GM13976 (cell line): ENCODE measurements at regions of chr1 and their contacts with region 1.

Region 1: DNA sequence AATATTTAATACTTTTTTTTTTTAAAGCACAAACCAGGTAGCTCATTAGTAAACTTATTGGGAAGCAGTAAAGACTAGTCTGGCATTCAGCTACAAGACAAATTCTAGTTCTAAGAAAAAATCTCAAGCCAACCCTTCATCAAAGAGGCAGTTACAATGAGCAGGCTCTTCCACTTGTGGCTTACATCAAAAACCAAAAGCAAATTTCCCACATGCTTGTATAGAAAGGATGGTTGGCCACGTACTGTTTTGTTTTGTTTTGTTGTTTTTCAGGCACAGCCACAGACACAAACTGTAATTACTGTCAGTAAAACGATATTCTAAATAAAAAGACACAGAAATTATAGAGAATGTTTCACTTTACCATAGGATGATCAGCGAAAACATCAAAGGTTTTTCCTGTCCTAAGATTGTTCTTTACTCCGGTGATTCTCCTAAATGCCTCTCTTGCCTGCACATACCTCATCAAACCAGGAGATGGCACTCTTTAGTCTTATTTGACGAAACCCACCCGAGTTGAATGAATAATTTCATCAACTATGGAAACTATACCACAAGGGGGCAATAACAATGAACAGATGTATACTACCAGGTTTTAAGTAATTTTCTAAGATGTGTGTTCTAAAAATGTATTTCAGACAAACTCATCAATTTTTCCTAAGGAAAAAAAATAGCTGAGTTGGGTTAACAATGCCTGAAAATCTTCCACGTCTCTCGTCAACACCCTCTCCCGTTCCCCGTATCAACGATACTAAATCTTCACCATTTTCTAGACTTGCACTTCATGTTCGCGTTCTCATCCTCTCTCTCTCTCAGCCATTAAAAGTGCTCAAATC is 26.9 kb downstream of the RPL5 start:
- DNase-seq: peak; percentile 66
- CTCF ChIP-seq: peak; percentile 71

Region 2: GRCh38 chr1:92461364-92462097 is 397.3 kb before region 1 on chr1:
- in situ Hi-C with region 1: no loop called
- DNase-seq: peak; percentile 54
- CTCF ChIP-seq: no peak

Region 3: GRCh38 chr1:92922356-92923035 is 63.7 kb after region 1 on chr1:
- in situ Hi-C with region 1: no loop called
- DNase-seq: no peak
- CTCF ChIP-seq: no peak

Region 4: GRCh38 chr1:92951141-92951582 is 92.4 kb after region 1 on chr1:
- in situ Hi-C with region 1: loop called (anchors 10 kb)
- DNase-seq: no peak
- CTCF ChIP-seq: peak; percentile 20

Region 5: DNA sequence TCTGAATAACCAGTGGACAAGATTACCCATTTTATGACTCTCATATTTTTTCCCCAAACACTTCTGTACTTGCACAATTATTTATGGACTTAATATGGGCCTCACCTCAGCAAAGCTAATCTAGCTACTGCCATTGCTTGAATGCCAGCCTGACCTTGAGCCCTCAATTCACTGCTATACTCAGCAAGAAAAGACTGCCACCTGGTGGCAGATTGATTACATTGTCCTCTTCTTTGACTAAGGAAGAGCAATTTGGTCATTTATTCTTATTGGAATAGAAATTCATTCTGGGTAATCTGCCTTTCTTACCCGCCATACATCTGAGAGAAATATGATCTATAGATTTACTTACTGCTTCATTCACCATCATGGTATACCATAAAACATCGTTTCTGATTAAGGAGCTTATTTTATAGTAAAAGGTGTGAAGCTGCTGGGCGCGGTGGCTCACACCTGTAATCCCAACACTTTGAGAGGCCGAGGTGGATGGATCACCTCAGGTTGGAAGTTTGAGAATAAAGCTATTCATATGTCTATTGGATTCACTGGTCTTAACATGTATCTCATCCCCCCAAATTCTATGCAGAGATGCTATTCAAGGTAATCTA is 135.4 kb after region 1 on chr1:
- in situ Hi-C with region 1: loop called (anchors 5 kb)
- DNase-seq: peak; percentile 61
- CTCF ChIP-seq: peak; percentile 44